ENCODE measurements at regions of chr21 and their contacts with region 1.

Region 1: DNA sequence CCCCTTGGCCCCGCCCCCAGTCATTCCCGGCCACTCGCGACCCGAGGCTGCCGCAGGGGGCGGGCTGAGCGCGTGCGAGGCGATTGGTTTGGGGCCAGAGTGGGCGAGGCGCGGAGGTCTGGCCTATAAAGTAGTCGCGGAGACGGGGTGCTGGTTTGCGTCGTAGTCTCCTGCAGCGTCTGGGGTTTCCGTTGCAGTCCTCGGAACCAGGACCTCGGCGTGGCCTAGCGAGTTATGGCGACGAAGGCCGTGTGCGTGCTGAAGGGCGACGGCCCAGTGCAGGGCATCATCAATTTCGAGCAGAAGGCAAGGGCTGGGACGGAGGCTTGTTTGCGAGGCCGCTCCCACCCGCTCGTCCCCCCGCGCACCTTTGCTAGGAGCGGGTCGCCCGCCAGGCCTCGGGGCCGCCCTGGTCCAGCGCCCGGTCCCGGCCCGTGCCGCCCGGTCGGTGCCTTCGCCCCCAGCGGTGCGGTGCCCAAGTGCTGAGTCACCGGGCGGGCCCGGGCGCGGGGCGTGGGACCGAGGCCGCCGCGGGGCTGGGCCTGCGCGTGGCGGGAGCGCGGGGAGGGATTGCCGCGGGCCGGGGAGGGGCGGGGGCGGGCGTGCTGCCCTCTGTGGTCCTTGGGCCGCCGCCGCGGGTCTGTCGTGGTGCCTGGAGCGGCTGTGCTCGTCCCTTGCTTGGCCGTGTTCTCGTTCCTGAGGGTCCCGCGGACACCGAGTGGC is at the start of gene SOD1:
- DNase-seq: peak; percentile 97
- H3K4me3 ChIP-seq: peak within 1 kb of the TSS; percentile 85 to 95 (median 90)
- H3K27ac ChIP-seq: peak within 1 kb of the TSS; percentile 93 to 96 (median 95)
- H3K4me1 ChIP-seq: peaks cover 0 to 42% (median 38%) of the 10 kb centered on the region in 4 donors
- H3K27me3 ChIP-seq: no peaks in the 10 kb centered on the region
- CTCF ChIP-seq: peak in 1 of 4 experiments; percentile 19
- EP300 ChIP-seq: no peak
- POLR2A ChIP-seq: peak; percentile 78 to 80
- total RNA-seq, gene SOD1: 169 to 279 (median 199) TPM

Region 2: DNA sequence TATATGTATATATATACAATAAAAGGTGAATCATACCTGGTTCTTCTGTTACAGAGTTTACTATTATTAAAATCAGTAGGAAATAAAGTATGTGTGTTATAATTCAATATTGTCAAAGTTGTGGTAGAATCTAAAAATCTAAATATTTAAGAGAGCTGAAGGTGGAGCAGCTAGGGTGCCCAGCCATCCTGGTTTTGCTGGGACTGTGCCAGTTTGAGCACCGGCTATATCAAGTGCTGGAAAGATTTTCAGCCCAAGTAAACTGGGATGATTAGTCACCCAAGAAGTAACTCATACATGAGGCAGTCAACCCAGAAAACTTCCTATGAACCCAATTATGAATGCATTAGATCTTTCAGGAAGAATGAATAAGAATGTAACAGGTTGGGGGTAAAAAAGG is 1140.8 kb before region 1 on chr21:
- intact Hi-C with region 1: no loop called
- DNase-seq: no peak
- H3K4me3 ChIP-seq: no peak overlapping the region
- H3K27ac ChIP-seq: no peak overlapping the region
- H3K4me1 ChIP-seq: no peaks in the 10 kb centered on the region
- H3K27me3 ChIP-seq: no peaks in the 10 kb centered on the region
- CTCF ChIP-seq: no peak
- EP300 ChIP-seq: no peak
- POLR2A ChIP-seq: no peak

Region 3: DNA sequence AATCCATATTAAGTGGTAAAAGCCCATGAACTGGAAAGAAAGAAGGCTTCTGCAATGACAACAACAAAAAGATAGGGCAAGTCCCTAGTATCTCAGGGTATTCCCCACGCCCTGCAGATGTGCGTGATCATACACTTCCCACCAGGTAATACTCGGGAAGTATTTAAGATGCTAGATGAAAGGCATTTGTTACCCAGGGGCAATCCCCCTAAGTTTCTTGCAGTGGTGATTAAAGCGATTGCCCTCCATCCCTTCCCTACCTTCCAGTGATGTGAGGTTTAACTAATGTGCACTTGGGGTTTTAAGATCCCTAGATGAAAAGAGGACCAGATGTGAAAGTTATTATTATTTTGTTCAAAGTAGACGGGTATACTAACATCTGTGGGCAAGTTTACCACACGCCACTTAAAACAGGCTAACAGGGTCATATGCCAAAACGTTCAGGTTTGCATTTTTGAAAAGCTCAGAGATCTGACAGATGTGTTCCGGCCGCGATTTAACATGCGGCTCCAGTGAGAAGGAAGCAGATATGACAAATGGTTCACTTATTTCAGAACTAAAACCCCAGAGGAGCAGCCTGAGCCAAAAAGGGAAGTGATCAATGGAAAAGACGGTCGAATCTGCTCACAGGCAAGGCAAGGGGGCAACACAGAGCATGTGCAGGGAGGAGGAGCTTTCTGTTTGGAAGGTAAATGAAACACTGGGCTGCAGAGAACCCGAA is 333.0 kb before region 1 on chr21:
- intact Hi-C with region 1: no loop called
- DNase-seq: no peak
- H3K4me3 ChIP-seq: no peak overlapping the region
- H3K27ac ChIP-seq: no peak overlapping the region
- H3K4me1 ChIP-seq: no peaks in the 10 kb centered on the region
- H3K27me3 ChIP-seq: no peaks in the 10 kb centered on the region
- CTCF ChIP-seq: no peak
- EP300 ChIP-seq: no peak
- POLR2A ChIP-seq: no peak

Region 4: GRCh38 chr21:31558962-31559367 is 100.7 kb before region 1 on chr21:
- intact Hi-C with region 1: no loop called
- DNase-seq: peak; percentile 86
- H3K4me3 ChIP-seq: peak overlapping the region; percentile 12 to 64 (median 52)
- H3K27ac ChIP-seq: no peak overlapping the region
- H3K4me1 ChIP-seq: peaks cover 0 to 29% (median 26%) of the 10 kb centered on the region in 4 donors
- H3K27me3 ChIP-seq: peaks cover 14 to 64% (median 38%) of the 10 kb centered on the region in 3 donors
- CTCF ChIP-seq: no peak
- EP300 ChIP-seq: no peak
- POLR2A ChIP-seq: no peak

Region 5: DNA sequence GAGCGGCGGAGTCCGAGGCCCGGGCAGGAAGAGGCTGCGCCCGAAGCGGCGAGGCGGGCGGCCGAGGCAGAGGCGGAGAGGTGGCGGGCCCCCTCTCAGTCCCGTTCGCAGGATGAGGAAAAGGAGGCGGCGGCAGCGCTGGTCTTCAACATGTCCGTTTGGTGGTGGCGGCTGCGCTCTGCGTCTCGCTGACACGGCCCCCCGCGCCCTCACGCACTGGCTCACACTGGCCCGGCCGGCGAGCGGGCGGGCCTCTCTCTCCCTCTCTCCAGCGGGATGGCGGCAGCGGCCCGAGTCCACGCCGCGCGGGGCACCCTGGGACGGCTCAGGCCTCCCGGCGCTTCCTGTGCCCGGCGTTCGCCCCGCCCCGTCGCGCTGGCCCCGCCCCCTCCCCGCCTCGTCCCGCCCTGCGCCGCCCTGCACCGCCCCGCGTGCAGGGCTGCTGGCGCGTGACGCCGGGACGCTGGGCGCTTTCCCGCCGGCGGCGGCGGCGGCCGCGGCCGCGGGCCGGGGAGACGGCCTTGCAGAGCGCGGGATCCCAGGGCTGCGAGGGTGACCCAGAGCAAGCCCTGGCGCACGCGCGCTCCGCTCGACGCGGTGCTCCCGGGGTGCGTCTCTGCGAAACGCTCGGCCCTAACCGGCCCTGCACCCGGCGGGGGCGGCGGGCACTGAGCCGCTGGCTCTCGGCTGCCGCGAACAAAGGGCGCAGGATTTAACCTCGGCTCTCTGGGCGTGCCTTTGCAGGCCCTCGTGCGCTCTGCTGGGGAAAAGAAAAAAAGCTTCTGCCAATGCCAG is 72.3 kb after region 1 on chr21 and contains the start of gene SCAF4:
- intact Hi-C with region 1: loop called (anchors 1 kb)
- DNase-seq: peak; percentile 94
- H3K4me3 ChIP-seq: peak within 1 kb of the TSS; percentile 76 to 99 (median 96)
- H3K27ac ChIP-seq: peak within 1 kb of the TSS; percentile 98 to 99 (median 98)
- H3K4me1 ChIP-seq: peaks cover 3 to 53% (median 43%) of the 10 kb centered on the region in 4 donors
- H3K27me3 ChIP-seq: no peaks in the 10 kb centered on the region
- CTCF ChIP-seq: no peak
- EP300 ChIP-seq: no peak
- POLR2A ChIP-seq: peak; percentile 74 to 78
- total RNA-seq, gene SCAF4: 9.6 to 19.1 (median 13.7) TPM

Measured in sigmoid colon (tissue), 7 donors.